ENCODE measurements at regions of chr6 and their contacts with region 1.

Region 1: GRCh38 chr6:68572525-68572924 is 62.6 kb upstream of the ADGRB3 start:
- DNase-seq: peak; percentile 15 to 67
- H3K4me3 ChIP-seq: no peak overlapping the region
- H3K27ac ChIP-seq: no peak overlapping the region
- H3K4me1 ChIP-seq: peaks cover 0 to 3% (median 0%) of the 10 kb centered on the region in 4 experiments; a peak in 3 of 7 replicates
- H3K27me3 ChIP-seq: no peaks in the 10 kb centered on the region
- CTCF ChIP-seq: peak; percentile 18 to 88 (median 85)
- EP300 ChIP-seq: no peak
- POLR2A ChIP-seq: no peak
- RAD21 ChIP-seq: peak; percentile 84 to 88

Region 2: GRCh38 chr6:68273297-68273696 is 299.2 kb before region 1 on chr6:
- CTCF ChIA-PET with region 1: no interaction called
- POLR2A ChIA-PET with region 1: no interaction called
- DNase-seq: no peak
- H3K4me3 ChIP-seq: no peak overlapping the region
- H3K27ac ChIP-seq: no peak overlapping the region
- H3K4me1 ChIP-seq: no peaks in the 10 kb centered on the region
- H3K27me3 ChIP-seq: no peaks in the 10 kb centered on the region
- CTCF ChIP-seq: no peak
- EP300 ChIP-seq: no peak
- POLR2A ChIP-seq: no peak
- RAD21 ChIP-seq: no peak

Region 3: DNA sequence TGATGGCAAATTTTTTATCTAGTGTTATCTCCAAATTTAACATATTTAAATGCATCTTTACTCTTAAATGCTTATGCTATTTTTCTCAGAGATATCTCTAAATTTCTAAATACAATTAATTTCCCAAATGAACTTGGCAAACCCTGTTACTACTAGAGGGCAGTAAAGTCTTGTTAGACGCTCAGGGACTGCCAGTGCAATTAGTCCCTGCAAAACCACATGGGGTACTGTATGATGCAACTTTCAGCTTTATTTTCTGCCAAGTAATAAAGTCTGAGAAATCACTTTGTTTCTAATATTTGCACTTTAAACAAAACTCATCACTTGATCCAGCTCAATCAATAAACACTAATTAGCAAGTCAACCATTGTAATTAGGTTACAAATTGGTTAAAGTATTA is 13.5 kb before region 1 on chr6:
- CTCF ChIA-PET with region 1: interaction called, 19 read pairs
- POLR2A ChIA-PET with region 1: no interaction called
- DNase-seq: no peak
- H3K4me3 ChIP-seq: no peak overlapping the region
- H3K27ac ChIP-seq: no peak overlapping the region; the same call in 1 of the 2 replicates
- H3K4me1 ChIP-seq: peaks cover 0 to 3% (median 0%) of the 10 kb centered on the region in 4 experiments; a peak in 1 of 7 replicates
- H3K27me3 ChIP-seq: no peaks in the 10 kb centered on the region
- CTCF ChIP-seq: peak in 2 of 3 experiments; percentile 18 to 20; a peak in 2 of 4 replicates
- EP300 ChIP-seq: no peak
- POLR2A ChIP-seq: no peak
- RAD21 ChIP-seq: peak; percentile 58 to 63

Region 4: GRCh38 chr6:68634726-68635411 is 62.3 kb after region 1 on chr6 and contains the start of gene ADGRB3:
- CTCF ChIA-PET with region 1: interaction called, 35 read pairs
- POLR2A ChIA-PET with region 1: interaction called, 3 read pairs
- DNase-seq: peak in 1 of 2 experiments; percentile 64
- H3K4me3 ChIP-seq: peak within 1 kb of the TSS; percentile 70 to 97 (median 83)
- H3K27ac ChIP-seq: no peak within 1 kb of the TSS
- H3K4me1 ChIP-seq: peaks cover 0 to 9% (median 5%) of the 10 kb centered on the region in 4 experiments; a peak in 5 of 7 replicates
- H3K27me3 ChIP-seq: peaks cover 0 to 25% (median 13%) of the 10 kb centered on the region in 4 experiments; a peak in 6 of 7 replicates
- CTCF ChIP-seq: no peak
- EP300 ChIP-seq: no peak
- POLR2A ChIP-seq: no peak
- RAD21 ChIP-seq: no peak
- total RNA-seq, gene ADGRB3: 0.94 and 1.2 TPM in 2 replicates

Region 5: GRCh38 chr6:68756454-68757375 is 184.2 kb after region 1 on chr6:
- CTCF ChIA-PET with region 1: no interaction called
- POLR2A ChIA-PET with region 1: no interaction called
- DNase-seq: no peak
- H3K4me3 ChIP-seq: no peak overlapping the region
- H3K27ac ChIP-seq: no peak overlapping the region
- H3K4me1 ChIP-seq: no peaks in the 10 kb centered on the region
- H3K27me3 ChIP-seq: no peaks in the 10 kb centered on the region
- CTCF ChIP-seq: no peak
- EP300 ChIP-seq: no peak
- POLR2A ChIP-seq: no peak
- RAD21 ChIP-seq: no peak

Region 6: DNA sequence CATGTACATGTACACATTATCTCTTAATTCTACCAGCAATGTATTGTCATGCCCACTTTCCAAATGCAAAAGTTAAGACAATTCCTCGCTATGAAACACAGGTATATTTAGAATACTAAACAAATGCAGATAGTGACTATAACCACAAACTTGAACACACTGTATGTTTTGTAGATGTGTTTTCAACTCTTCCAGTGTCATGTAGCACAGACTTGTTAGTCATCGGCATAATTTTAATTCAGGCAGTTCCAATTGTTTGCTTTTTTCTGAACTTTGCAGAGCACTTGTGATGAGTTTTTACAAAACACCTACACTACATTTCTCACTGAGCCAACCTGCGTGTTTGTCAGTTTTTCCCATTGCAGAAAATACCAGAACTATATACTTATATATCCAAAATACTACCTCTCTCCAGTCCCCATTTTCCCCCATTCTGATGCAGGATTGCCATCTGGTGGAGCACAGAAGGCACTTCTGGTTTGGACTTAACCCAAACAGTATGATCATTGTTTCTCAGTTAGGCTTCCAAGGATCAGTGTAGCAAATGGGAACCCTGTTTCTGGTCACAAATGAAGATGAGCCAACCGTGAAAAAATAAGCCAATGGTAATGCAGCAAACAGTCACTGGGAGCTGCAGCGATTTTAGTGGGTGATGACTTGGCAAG is 206.0 kb after region 1 on chr6:
- CTCF ChIA-PET with region 1: interaction called, 28 read pairs
- POLR2A ChIA-PET with region 1: no interaction called
- DNase-seq: peak; percentile 7 to 50
- H3K4me3 ChIP-seq: no peak overlapping the region
- H3K27ac ChIP-seq: no peak overlapping the region
- H3K4me1 ChIP-seq: no peaks in the 10 kb centered on the region
- H3K27me3 ChIP-seq: no peaks in the 10 kb centered on the region
- CTCF ChIP-seq: peak; percentile 35 to 86 (median 86)
- EP300 ChIP-seq: no peak
- POLR2A ChIP-seq: no peak
- RAD21 ChIP-seq: peak; percentile 94 to 96

Measured in H1 (cell line).